Caco-2 (cell line): ENCODE measurements at regions of chr12 and their contacts with region 1.

Region 1: DNA sequence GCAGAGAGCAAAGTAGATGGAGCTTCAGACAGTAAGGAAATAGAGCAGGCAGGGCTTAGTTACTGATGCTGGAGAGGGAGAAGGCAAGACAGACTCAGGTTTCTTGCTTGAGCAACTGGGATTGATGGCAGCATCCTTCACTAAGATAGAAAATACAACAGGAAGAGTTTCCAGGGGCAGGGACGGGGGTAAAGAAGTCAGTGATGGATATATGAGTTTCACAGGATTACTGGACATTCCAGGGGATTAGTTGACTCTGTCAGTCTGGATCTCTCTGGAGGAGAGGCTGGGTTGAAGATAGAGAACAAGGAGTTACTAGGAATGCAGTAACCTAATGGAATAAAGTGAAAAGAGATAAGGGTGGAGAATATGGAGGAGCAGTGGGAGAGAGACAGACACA is 74.5 kb upstream of the ATF1 start:
- DNase-seq: peak; percentile 56 to 60
- H3K4me3 ChIP-seq: no peak overlapping the region
- H3K4me3 Mint-ChIP-seq: peak overlapping the region; percentile 10
- H3K27ac Mint-ChIP-seq: peak overlapping the region; percentile 58
- H3K4me1 ChIP-seq: peaks cover 12% of the 10 kb centered on the region; the same call in 1 of the 2 replicates
- H3K4me1 Mint-ChIP-seq: peaks cover 25% of the 10 kb centered on the region
- H3K27me3 ChIP-seq: no peaks in the 10 kb centered on the region
- H3K27me3 Mint-ChIP-seq: no peaks in the 10 kb centered on the region
- CTCF ChIP-seq: no peak

Region 2: DNA sequence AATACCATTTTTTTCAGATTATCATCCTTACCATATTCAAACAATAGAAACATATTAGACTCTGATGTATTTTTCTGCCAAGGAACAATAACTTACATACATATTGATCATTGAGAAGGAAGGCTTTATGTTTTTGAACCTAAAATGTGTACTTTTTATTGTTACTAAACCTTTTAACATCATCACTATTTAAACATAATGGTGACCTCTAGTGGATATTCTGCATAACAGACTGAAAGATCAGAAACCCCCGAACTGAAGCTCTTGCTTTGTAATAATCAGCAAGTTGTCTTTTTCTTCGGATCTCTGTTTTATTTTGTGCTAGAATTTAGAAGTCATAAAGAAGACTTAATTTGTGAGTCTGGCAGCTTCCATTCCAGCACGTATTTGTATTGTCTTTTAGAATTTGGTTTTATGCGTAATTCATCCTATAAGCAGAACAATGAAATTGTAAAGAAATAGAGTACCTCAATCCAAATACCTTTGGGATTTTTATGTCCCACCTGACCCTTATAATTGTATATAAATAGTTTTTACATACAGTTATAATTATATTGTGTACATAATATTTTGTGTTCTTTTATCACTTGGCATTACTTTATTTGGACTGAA is 51.5 kb before region 1 on chr12:
- CTCF ChIA-PET with region 1: interaction called, 3 read pairs
- POLR2A ChIA-PET with region 1: no interaction called
- intact Hi-C with region 1: loop called (anchors 2 kb)
- DNase-seq: peak in 1 of 2 experiments; percentile 37
- H3K4me3 ChIP-seq: no peak overlapping the region
- H3K4me3 Mint-ChIP-seq: no peak overlapping the region
- H3K27ac Mint-ChIP-seq: peak overlapping the region; percentile 74
- H3K4me1 ChIP-seq: peaks cover 51% of the 10 kb centered on the region
- H3K4me1 Mint-ChIP-seq: peaks cover 57% of the 10 kb centered on the region
- H3K27me3 ChIP-seq: no peaks in the 10 kb centered on the region
- H3K27me3 Mint-ChIP-seq: no peaks in the 10 kb centered on the region
- CTCF ChIP-seq: peak; percentile 73 to 83